ENCODE measurements at regions of chr3 and their contacts with region 1.

Region 1: DNA sequence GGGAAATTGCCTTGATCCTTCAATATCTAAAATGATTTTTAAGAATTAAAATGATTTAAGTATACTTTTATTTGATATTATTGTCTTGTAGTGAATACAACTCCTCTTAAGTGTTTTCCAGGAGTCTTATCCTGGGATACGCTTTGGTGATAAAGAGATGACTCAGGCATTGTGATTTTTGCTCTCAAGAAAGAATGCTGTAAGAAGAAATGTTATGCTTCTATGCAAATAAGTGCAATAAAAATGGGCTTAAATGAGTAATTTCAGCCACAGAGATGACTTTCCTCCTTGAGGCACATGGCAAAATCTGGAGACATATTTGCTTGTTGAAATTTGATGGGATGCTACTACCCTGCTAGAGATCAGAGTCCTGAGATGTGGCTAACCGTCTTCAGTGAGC is 358.6 kb upstream of the BCHE start:
- DNase-seq: no peak
- H3K4me3 Mint-ChIP-seq: no peak overlapping the region
- H3K27ac Mint-ChIP-seq: no peak overlapping the region
- H3K4me1 Mint-ChIP-seq: no peaks in the 10 kb centered on the region
- H3K27me3 Mint-ChIP-seq: no peaks in the 10 kb centered on the region
- CTCF ChIP-seq: no peak

Region 2: GRCh38 chr3:166071831-166072230 is 124.0 kb before region 1 on chr3:
- CTCF ChIA-PET with region 1: no interaction called
- POLR2A ChIA-PET with region 1: no interaction called
- intact Hi-C with region 1: no loop called
- DNase-seq: no peak
- H3K4me3 Mint-ChIP-seq: no peak overlapping the region
- H3K27ac Mint-ChIP-seq: no peak overlapping the region
- H3K4me1 Mint-ChIP-seq: no peaks in the 10 kb centered on the region
- H3K27me3 Mint-ChIP-seq: no peaks in the 10 kb centered on the region
- CTCF ChIP-seq: no peak

Region 3: GRCh38 chr3:166788961-166789360 is 593.2 kb after region 1 on chr3:
- CTCF ChIA-PET with region 1: interaction called, 10 read pairs
- POLR2A ChIA-PET with region 1: no interaction called
- intact Hi-C with region 1: no loop called
- DNase-seq: no peak
- H3K4me3 Mint-ChIP-seq: no peak overlapping the region
- H3K27ac Mint-ChIP-seq: no peak overlapping the region
- H3K4me1 Mint-ChIP-seq: peaks cover 6% of the 10 kb centered on the region
- H3K27me3 Mint-ChIP-seq: no peaks in the 10 kb centered on the region
- CTCF ChIP-seq: no peak